Activated B cell treated with CpG ODN at 0.5 μM for 24 hours (primary cell): ENCODE measurements at regions of chr5 and their contacts with region 1.

Region 1: DNA sequence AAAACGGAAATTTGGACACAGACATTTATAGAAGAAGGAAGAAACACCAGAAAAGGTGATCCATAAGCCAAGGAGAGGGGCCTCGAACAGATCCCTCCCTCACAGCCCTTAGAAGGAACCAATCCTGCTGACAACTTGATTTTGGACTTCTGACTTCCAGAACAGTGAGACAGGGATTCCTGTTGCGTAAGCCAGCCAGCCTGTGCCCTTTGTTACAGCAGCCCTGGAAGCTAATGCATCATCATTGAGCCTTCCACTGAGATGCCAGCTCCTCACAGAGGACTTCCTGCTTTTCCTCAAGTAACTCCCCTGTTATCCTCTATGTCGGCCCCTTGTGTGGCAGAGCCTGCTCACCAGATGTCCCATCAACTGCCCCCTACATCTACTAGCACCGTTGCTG is 94.1 kb downstream of the JMY start:
- DNase-seq: no peak
- ATAC-seq: no peak
- H3K4me3 Mint-ChIP-seq: no peak overlapping the region
- H3K27ac Mint-ChIP-seq: no peak overlapping the region
- H3K4me1 Mint-ChIP-seq: no peaks in the 10 kb centered on the region
- H3K27me3 Mint-ChIP-seq: no peaks in the 10 kb centered on the region
- CTCF ChIP-seq: no peak

Region 2: DNA sequence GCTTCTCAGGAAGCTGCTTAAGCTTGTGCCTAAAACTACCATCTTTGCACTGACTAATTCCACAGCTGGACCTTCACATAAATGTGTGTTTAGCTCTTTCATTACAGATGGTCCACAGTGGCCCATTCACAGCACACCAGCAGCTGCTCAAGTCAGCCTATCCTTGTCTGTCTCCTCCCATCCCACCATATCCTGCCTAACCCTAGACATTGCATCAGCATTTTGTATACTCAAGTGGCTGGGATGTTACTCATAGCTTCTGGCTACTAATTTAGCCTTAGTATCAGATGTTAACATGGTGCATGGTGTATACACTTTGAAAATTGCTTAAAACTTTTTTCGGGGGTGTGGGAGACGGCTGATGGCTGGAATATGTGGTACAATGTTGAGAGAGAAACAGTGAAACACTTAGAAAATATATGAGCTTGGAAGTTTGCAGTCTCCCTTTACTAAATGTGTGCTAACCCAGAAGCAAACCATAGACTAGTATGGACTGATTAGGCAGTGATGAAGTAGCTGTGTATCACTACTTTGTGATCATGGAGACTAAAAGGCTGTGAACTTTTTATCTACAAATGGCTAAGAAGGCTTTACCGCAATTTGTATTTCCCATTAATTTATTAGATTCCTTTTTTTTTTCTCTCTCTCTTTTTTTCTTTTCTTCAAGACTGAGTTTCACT is 11.0 kb before region 1 on chr5:
- CTCF ChIA-PET with region 1: no interaction called
- POLR2A ChIA-PET with region 1: no interaction called
- intact Hi-C with region 1: loop called (anchors 1 kb)
- DNase-seq: no peak
- ATAC-seq: no peak
- H3K4me3 Mint-ChIP-seq: no peak overlapping the region
- H3K27ac Mint-ChIP-seq: no peak overlapping the region
- H3K4me1 Mint-ChIP-seq: no peaks in the 10 kb centered on the region
- H3K27me3 Mint-ChIP-seq: no peaks in the 10 kb centered on the region
- CTCF ChIP-seq: no peak